Lower leg skin (tissue), 4 donors: ENCODE measurements at regions of chr11 and their contacts with region 1.

Region 1: DNA sequence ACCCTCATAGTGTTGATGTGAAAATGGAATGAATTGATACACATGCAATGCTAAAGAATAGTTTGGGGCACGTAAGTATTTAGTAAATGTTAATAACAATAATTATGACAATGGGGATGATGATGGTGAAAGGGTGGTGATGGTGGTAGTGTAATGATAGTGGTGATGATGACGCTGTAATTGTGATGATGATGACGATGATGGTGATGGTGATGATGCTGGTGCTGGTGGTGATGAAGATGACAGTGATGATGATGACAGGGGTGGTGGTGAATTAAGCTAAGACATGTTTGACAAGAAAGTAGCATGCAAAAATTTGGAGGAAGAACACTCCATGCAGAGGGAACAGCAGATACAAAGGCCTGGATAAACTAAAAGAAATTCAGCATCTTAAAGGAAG is 364.4 kb upstream of the API5 start:
- DNase-seq: no peak
- H3K4me3 ChIP-seq: no peak overlapping the region
- CTCF ChIP-seq: no peak
- POLR2A ChIP-seq: no peak

Region 2: DNA sequence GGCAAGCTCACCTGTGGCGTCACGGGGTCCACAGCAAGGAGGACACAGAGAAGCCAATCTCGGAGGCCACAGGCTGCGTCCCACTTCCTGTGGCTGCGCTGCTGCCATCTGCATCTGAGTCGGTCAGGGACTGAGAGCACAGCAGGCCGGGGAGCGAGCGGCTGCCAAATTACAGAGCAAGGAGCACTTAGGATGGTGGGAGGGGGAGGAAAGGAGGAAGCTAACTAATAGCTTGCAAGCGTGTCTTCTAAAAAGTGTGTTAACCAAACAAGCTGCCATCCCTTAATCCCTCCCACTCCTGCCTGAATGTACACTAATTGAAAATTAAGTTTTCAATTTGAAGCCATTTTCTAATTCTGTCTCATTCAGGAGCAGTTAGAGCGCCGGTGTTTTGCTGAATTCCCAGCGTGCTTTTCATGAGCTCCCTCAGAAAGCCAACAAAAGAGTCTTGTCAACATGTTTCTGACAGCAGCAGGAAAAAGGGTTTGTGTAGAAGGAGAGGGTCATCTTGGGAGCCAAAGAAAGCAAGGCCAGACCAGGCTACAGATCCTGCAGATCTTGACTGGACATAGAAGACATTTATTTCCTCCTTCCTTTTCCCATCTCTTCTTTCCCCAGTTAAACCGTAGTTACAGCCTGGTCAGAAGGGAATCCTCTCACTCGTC is 322.0 kb after region 1 on chr11:
- intact Hi-C with region 1: loop called (anchors 5 kb)
- DNase-seq: no peak
- H3K4me3 ChIP-seq: no peak overlapping the region
- CTCF ChIP-seq: no peak
- POLR2A ChIP-seq: no peak